ENCODE measurements at regions of chr6 and their contacts with region 1.

Region 1: DNA sequence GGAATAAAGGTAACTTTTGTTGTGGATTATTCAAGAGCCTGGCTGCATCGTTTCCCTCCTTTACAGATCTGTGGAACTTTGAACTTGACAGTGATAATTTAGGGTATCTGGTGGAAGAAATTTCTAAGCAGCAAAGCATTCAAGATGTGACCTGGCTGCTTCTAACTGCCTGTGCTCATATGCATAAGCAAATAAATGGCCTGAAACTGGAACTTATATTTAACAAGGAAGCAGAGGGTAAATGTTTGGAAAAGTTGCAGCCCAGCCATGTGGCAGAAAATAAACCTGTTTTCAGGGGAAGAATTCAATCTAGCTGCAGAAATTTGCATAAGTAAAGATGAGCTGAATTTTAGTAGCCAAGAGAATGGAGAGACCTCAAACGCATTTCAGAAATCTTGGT is 173.5 kb downstream of the C6orf118 start:
- DNase-seq: no peak
- ATAC-seq: no peak
- H3K4me3 ChIP-seq: no peak overlapping the region
- H3K27ac ChIP-seq: no peak overlapping the region
- H3K4me1 ChIP-seq: no peaks in the 10 kb centered on the region
- H3K27me3 ChIP-seq: no peaks in the 10 kb centered on the region
- CTCF ChIP-seq: no peak
- POLR2A ChIP-seq: no peak

Region 2: GRCh38 chr6:164905311-164905710 is 230.6 kb before region 1 on chr6:
- intact Hi-C with region 1: no loop called
- DNase-seq: no peak
- ATAC-seq: no peak
- H3K4me3 ChIP-seq: no peak overlapping the region
- H3K27ac ChIP-seq: no peak overlapping the region
- H3K4me1 ChIP-seq: no peaks in the 10 kb centered on the region
- H3K27me3 ChIP-seq: no peaks in the 10 kb centered on the region
- CTCF ChIP-seq: no peak
- POLR2A ChIP-seq: no peak

Region 3: DNA sequence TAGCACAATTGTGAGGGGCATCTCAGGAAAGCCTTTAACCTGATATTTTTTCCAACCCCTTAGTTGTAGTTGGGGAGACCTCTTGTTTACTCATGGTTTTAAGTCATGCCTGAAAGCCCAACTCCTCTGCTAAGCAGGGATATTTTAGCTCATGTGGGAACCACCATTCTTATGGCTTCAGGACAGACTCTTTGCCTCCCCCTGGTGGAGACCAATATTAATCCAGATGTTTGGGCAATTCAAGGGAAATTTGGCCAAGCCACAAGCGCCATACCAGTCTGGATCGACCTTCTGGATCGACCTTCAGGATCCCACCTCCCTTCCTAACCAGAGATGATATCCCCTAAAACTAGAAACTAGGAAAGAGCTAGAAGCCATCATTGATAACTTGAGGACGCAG is 37.7 kb before region 1 on chr6:
- intact Hi-C with region 1: no loop called
- DNase-seq: no peak
- ATAC-seq: no peak
- H3K4me3 ChIP-seq: no peak overlapping the region
- H3K27ac ChIP-seq: no peak overlapping the region
- H3K4me1 ChIP-seq: no peaks in the 10 kb centered on the region
- H3K27me3 ChIP-seq: no peaks in the 10 kb centered on the region
- CTCF ChIP-seq: peak in 2 of 12 donors; percentile 11 to 23
- POLR2A ChIP-seq: no peak

Region 4: GRCh38 chr6:165146456-165146855 is 10.6 kb after region 1 on chr6:
- intact Hi-C with region 1: loop called in 1 of 10 experiments (anchors 1 kb)
- DNase-seq: no peak
- ATAC-seq: no peak
- H3K4me3 ChIP-seq: no peak overlapping the region
- H3K27ac ChIP-seq: no peak overlapping the region
- H3K4me1 ChIP-seq: no peaks in the 10 kb centered on the region
- H3K27me3 ChIP-seq: no peaks in the 10 kb centered on the region
- CTCF ChIP-seq: no peak
- POLR2A ChIP-seq: no peak